ENCODE measurements at regions of chr5 and their contacts with region 1.

Region 1: DNA sequence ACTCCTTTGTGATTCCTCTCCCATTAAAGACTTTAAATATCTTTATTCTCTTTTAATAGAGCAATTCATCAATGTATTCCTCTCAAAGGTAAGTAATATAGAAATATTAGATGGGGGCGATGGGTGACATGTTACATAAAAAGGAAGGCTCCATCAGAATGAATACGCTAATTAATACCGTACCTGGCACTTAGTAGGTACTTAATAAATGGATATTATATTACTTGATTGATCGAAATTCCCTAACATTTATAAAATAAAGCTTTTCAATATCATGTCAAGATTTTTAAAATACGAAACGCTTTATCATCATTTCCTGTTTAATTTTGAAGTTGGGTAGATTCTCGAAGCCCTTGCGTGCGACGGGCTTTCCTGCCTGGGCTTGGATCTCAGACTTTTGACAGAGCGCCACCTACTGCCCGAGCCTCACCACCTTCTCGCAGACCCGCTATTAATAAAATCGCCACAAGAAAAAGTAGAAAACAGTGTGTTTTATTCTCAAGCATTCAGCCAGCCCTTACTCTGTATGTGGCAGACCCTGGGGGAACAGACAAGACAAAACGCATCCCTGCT is 99.4 kb downstream of the C5orf15 start:
- DNase-seq: peak; percentile 77
- H3K4me3 ChIP-seq: no peak overlapping the region
- H3K27ac ChIP-seq: no peak overlapping the region
- H3K4me1 ChIP-seq: peaks cover 16 to 28% of the 10 kb centered on the region in 2 experiments; a peak in 3 of 4 replicates
- H3K27me3 ChIP-seq: peaks cover 10% of the 10 kb centered on the region; the same call in 1 of the 2 replicates
- CTCF ChIP-seq: peak; percentile 83
- EP300 ChIP-seq: no peak
- RAD21 ChIP-seq: peak; percentile 90

Region 2: DNA sequence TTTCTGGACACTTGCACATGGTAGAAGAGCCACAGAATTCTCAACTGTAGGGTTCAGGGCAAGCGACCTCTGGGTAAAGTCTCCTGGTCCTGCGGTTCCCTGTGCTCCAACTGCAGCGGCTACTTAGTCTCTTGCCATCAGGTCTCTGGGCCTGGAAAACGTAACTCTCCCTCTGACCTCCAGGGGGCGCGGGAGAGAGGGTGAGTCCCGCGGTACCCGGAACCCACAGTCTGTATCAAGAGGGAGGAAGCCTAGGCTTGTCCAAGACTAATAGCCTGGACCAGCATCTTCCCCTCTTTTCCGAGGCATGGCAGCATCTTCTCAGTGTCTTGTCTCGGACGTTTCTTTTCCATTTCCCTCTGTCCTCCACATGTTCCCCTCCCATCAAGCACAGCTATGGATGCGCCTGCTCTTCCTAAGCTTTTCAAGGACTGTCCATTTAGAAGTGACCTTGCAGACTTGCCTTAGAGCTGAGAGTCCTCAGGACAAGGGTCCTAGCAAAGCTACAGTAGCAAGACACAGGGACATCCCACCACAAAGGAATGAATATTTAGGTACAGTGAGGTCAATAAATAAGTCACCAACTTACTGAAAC is 316.0 kb before region 1 on chr5:
- CTCF ChIA-PET with region 1: interaction called, 11 read pairs
- POLR2A ChIA-PET with region 1: no interaction called
- DNase-seq: peak; percentile 58
- H3K4me3 ChIP-seq: no peak overlapping the region; a peak in 1 of 4 replicates
- H3K27ac ChIP-seq: no peak overlapping the region
- H3K4me1 ChIP-seq: no peaks in the 10 kb centered on the region
- H3K27me3 ChIP-seq: no peaks in the 10 kb centered on the region
- CTCF ChIP-seq: peak; percentile 66
- EP300 ChIP-seq: no peak
- RAD21 ChIP-seq: peak; percentile 68

Region 3: GRCh38 chr5:133610489-133611356 is 258.3 kb before region 1 on chr5:
- CTCF ChIA-PET with region 1: interaction called, 17 read pairs
- POLR2A ChIA-PET with region 1: no interaction called
- DNase-seq: peak; percentile 87
- H3K4me3 ChIP-seq: peak overlapping the region; percentile 26 to 35; a peak in 3 of 4 replicates
- H3K27ac ChIP-seq: no peak overlapping the region
- H3K4me1 ChIP-seq: peaks cover 0 to 29% of the 10 kb centered on the region in 2 experiments; a peak in 2 of 4 replicates
- H3K27me3 ChIP-seq: peaks cover 37% of the 10 kb centered on the region
- CTCF ChIP-seq: peak; percentile 45
- EP300 ChIP-seq: no peak
- RAD21 ChIP-seq: peak; percentile 71

Region 4: GRCh38 chr5:133714161-133714915 is 154.7 kb before region 1 on chr5:
- CTCF ChIA-PET with region 1: interaction called, 34 read pairs
- POLR2A ChIA-PET with region 1: interaction called, 4 read pairs
- DNase-seq: peak; percentile 74
- H3K4me3 ChIP-seq: no peak overlapping the region
- H3K27ac ChIP-seq: peak overlapping the region in 1 of 2 experiments; percentile 96; a peak in 2 of 4 replicates
- H3K4me1 ChIP-seq: peaks cover 0 to 45% of the 10 kb centered on the region in 2 experiments; a peak in 2 of 4 replicates
- H3K27me3 ChIP-seq: no peaks in the 10 kb centered on the region
- CTCF ChIP-seq: no peak
- EP300 ChIP-seq: peak in 1 of 2 experiments; percentile 96; a peak in 2 of 4 replicates
- RAD21 ChIP-seq: peak; percentile 43

Region 5: DNA sequence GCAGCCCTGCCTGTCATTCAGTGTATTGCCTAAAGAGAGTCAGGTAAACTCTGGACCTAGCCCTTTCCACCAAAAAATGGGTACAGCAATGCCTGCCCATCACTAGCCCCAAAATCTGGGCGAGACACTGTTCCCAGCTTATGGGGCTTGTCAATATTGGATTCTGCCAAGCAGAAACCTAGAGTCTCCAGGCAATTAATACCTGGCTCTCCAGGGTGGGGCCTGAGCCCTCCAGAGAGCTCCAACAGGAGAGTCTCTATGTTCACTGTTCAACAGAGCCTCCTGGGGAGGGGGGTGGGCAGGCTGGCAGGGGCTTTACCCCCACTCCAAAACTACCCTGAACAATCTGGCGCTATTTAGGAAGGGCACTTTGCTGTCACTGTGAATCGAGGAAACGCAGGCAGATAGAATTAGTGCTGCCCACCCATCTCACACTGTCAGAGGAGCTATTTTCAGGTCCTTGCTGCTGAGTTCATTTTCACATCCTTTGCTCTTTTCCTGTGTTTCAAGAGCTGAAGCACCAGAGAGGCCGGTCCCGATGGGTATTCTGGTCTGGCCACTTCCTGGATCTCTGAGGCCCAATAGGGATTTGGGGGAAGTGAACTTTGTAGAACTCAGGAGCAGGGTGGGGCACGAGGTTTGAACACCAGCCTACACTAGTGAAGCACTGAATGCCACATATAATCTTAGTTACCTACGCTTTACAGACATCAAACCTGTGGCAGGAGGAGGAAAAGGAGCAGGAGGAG is 22.4 kb before region 1 on chr5:
- CTCF ChIA-PET with region 1: interaction called, 24 read pairs
- POLR2A ChIA-PET with region 1: no interaction called
- DNase-seq: no peak
- H3K4me3 ChIP-seq: no peak overlapping the region
- H3K27ac ChIP-seq: no peak overlapping the region
- H3K4me1 ChIP-seq: peaks cover 0 to 16% of the 10 kb centered on the region in 2 experiments; a peak in 1 of 4 replicates
- H3K27me3 ChIP-seq: no peaks in the 10 kb centered on the region
- CTCF ChIP-seq: no peak
- EP300 ChIP-seq: no peak
- RAD21 ChIP-seq: no peak

Region 6: DNA sequence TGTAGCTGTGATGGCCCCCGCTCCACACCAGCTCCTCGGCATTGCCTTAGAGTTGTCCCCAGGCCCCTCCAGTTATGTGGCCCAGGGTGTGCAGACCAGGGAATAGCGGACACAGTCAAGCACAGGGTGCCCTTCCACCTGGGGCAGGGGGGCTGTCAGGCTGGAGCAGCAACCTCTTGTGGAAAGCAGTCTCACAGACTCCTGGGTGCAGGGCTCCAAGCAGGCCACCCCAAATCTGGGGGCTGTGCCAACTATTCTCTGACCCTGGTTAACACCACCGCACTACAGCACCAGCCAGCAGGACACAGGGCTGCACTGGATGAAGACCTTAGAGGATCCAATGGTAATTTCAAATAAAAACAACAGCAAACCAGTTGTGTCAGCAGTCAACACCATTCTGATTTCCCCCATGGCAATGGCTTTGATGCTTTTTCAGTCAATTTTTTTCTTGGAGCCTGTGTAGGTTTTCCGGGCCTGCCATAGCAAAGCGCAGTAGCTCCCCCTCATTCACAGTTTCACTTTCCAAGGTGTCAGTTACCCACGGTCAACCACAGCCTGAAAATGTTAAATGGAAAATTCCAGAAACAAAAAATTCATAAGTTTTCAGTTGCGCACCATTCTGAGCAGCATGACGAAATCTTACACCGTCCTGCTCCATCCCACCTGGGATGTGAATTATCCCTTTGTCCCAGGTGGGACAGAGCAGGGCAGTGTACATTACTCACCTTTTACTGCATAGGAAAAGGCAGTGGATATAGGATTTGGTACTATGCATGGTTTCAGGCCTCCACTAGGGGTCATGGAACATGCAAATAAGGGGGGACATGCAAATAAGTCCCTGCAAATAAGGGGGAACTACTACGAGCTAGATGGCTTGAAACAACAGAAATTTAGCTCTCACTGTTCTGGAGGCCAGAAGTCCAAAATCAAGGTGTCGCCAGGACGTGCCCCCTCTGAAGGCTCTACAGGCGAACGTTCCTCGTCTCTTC is 50.4 kb after region 1 on chr5:
- CTCF ChIA-PET with region 1: interaction called, 10 read pairs
- POLR2A ChIA-PET with region 1: no interaction called
- DNase-seq: no peak
- H3K4me3 ChIP-seq: no peak overlapping the region
- H3K27ac ChIP-seq: no peak overlapping the region
- H3K4me1 ChIP-seq: peaks cover 0 to 32% of the 10 kb centered on the region in 2 experiments; a peak in 2 of 4 replicates
- H3K27me3 ChIP-seq: no peaks in the 10 kb centered on the region; the same call in 1 of the 2 replicates
- CTCF ChIP-seq: no peak; the same call in 1 of the 2 replicates
- EP300 ChIP-seq: no peak
- RAD21 ChIP-seq: no peak

Region 7: GRCh38 chr5:133952729-133953567 is 83.9 kb after region 1 on chr5:
- CTCF ChIA-PET with region 1: interaction called, 10 read pairs
- POLR2A ChIA-PET with region 1: no interaction called
- DNase-seq: no peak
- H3K4me3 ChIP-seq: no peak overlapping the region
- H3K27ac ChIP-seq: peak overlapping the region; percentile 50 to 64
- H3K4me1 ChIP-seq: peaks cover 0 to 3% of the 10 kb centered on the region in 2 experiments; a peak in 1 of 4 replicates
- H3K27me3 ChIP-seq: no peaks in the 10 kb centered on the region
- CTCF ChIP-seq: no peak
- EP300 ChIP-seq: peak in 1 of 2 experiments; percentile 26; a peak in 1 of 4 replicates
- RAD21 ChIP-seq: no peak

Region 8: DNA sequence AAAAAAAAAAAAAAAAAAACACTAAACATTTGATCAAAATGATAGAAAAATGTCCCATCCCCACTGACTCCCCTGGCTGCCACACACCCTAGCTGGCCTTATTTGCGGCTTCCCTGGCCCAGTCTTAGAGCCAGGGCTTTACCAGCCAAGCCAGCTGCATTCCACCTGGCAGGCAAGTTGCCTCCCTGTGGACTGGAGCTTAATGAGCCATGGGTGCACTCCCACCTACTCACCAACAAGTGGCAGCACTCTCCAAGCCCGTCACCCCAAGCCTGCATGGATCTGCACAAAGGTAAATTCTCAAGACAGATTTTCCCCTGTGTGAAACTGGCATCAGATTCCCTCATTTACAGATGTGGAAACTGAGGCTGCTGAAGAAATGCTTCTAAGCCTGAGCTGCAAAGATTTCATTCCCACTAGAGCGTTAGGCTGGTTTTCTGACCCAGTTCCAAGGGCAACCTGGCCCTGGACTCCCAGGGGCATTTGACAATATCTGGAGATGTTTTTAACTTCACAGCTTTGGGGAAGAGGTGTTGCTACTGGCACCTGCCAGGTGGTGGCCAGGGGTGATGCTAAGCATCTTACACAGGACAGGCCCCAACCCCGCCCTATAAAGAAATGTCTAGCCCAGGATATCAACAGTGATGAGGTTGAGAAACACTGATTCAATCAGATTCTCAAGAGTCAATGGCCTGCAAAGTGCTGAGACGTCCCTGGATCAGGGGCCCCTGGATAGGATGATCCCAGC is 157.7 kb after region 1 on chr5:
- CTCF ChIA-PET with region 1: no interaction called
- POLR2A ChIA-PET with region 1: no interaction called
- DNase-seq: peak; percentile 80
- H3K4me3 ChIP-seq: no peak overlapping the region
- H3K27ac ChIP-seq: no peak overlapping the region
- H3K4me1 ChIP-seq: no peaks in the 10 kb centered on the region
- H3K27me3 ChIP-seq: no peaks in the 10 kb centered on the region
- CTCF ChIP-seq: peak; percentile 58
- EP300 ChIP-seq: no peak
- RAD21 ChIP-seq: peak; percentile 64